AG04449 (cell line): ENCODE measurements at regions of chr11 and their contacts with region 1.

Region 1: GRCh38 chr11:72430741-72431570 is 3.4 kb downstream of the CLPB start:
- DNase-seq: no peak
- H3K4me3 ChIP-seq: no peak overlapping the region
- CTCF ChIP-seq: peak; percentile 75

Region 2: DNA sequence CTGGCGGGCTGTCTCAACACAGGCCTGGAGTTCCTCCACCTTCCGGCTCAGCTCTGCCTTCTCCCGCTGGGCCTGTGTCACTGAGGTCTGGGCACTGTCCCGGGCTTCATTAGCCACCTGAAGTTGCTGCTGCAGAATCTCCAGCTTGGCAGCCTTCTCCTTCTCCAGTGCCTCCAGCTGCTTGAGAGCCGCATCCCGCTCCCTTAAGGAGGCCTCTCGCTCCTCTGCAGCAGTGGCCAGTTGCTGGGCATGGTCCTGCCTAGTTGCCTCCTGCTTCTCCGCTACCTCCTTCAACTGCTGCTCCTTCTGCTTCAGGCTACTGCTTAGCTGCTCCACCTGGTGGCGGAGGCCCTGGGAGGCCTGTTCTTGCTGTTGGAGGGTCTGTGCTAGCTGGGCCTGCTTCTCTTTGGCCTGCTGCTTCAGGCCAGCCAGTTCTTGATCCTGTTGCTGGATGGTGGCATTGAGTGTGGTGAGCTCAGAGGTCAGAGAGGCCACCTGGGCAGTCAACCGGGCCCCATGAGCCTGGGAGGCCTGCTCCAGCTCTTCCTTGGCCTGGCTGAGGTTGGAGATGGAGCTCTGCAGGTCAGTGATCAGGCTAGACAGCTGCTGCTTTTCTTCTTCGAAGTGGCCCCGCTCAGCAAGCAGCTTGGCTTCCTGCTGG is 415.3 kb before region 1 on chr11:
- CTCF ChIA-PET with region 1: interaction called, 13 read pairs
- POLR2A ChIA-PET with region 1: no interaction called
- DNase-seq: no peak
- H3K4me3 ChIP-seq: no peak overlapping the region
- CTCF ChIP-seq: peak; percentile 58

Region 3: GRCh38 chr11:72102946-72103753 is 327.8 kb before region 1 on chr11 and contains the start of gene LAMTOR1:
- CTCF ChIA-PET with region 1: interaction called, 11 read pairs
- POLR2A ChIA-PET with region 1: no interaction called
- DNase-seq: peak; percentile 91
- H3K4me3 ChIP-seq: peak within 1 kb of the TSS; percentile 78
- CTCF ChIP-seq: peak; percentile 40

Region 4: DNA sequence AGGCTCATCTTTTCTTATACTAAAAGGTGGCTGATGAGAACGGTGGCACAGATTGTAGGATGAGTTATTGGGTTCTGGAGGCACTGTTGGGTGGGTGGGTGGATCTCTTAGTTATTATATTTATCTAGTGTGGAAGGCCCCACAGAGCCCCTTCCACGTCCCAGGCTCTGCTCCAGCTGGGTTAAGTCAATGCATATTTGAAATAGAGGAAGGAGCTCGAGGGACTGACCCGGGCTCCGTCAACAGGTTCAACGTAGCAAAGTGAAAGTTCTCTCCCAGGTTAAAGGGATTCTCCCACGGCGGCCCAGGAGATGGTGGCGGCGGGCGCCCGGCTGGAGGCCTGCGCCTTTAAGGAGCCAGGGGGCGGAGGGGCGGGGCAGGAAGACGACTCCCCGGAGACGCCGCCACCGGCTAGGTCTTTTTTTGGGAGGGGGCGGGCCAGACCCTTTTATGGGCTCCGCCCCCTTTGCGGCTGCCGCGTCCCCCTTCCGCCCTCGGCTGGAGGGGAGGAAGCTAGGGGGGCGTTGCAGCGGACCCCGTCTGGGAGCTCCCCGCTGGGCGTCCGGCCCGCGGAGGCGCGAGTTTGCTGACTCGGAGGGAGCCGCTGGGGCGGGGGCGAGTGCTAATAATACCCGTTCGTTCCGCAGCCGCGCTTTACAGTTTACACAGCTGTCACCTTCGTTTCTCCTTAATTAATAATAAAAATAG is 207.9 kb before region 1 on chr11:
- CTCF ChIA-PET with region 1: interaction called, 21 read pairs
- POLR2A ChIA-PET with region 1: no interaction called
- DNase-seq: no peak
- H3K4me3 ChIP-seq: peak overlapping the region; percentile 91
- CTCF ChIP-seq: peak; percentile 35

Region 5: DNA sequence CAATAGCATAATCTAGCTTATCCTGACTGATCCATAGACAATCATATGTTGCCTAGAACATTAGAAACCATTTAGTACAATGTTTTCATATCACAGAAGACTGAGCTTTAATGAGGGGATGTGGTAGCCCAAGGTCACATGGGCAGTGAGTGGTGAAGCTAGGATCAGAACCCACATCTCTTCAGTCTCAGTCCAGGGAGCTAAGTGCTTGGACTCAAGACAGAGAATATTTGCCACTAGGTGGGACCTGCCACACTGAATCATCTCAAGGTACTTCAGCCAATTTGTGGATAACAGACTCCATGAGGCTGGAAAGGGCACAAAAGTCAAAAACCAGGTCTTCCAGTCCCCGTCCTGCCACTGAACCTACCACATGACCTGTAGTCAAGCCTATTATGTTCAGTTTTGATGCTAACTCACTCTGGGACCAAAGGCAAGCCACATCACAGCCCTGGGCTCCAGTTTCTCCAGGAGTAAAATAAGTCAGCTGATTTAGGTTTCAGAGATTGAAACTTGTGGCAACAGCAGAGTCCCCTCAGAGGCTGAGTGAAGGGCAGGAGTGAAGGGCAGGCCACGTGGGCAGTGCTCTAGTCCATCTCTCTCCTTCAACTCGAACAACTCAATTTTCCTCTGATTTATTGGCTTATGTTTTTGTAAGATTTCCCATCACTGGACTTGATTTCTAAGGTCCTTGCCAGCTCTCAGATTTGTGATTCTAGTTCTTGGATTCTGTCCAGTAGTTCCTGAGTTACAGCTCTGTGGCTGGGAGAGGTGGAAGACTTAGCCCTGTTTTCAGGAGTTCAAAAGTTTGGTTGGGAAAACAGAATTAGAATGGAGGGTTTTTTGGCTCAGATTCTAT is 102.4 kb before region 1 on chr11:
- CTCF ChIA-PET with region 1: interaction called, 14 read pairs
- POLR2A ChIA-PET with region 1: no interaction called
- DNase-seq: no peak
- H3K4me3 ChIP-seq: no peak overlapping the region
- CTCF ChIP-seq: peak; percentile 10

Region 6: GRCh38 chr11:72361321-72361720 is 69.6 kb before region 1 on chr11:
- CTCF ChIA-PET with region 1: no interaction called
- POLR2A ChIA-PET with region 1: no interaction called
- DNase-seq: no peak
- H3K4me3 ChIP-seq: no peak overlapping the region
- CTCF ChIP-seq: no peak

Region 7: DNA sequence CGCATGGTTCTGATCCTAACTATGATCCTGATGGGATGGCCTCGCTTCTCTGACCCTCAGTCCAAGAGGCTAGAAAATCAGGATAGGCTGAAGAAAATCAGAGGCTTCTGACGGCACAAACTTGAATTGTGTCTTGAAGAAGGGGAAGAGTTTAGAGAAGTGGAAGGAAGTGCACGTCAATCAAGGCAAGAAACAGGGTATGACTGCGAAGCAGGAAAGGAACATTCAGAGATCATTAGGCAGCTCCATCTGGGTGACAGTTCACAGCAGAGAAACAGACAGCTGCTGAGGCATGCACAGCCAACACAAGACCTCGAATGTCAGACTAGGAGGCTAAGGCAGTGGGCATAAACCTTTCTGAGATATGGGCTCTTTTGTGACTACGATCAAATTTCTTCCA is 25.9 kb before region 1 on chr11:
- CTCF ChIA-PET with region 1: interaction called, 22 read pairs
- POLR2A ChIA-PET with region 1: no interaction called
- DNase-seq: no peak
- H3K4me3 ChIP-seq: no peak overlapping the region
- CTCF ChIP-seq: no peak

Region 8: DNA sequence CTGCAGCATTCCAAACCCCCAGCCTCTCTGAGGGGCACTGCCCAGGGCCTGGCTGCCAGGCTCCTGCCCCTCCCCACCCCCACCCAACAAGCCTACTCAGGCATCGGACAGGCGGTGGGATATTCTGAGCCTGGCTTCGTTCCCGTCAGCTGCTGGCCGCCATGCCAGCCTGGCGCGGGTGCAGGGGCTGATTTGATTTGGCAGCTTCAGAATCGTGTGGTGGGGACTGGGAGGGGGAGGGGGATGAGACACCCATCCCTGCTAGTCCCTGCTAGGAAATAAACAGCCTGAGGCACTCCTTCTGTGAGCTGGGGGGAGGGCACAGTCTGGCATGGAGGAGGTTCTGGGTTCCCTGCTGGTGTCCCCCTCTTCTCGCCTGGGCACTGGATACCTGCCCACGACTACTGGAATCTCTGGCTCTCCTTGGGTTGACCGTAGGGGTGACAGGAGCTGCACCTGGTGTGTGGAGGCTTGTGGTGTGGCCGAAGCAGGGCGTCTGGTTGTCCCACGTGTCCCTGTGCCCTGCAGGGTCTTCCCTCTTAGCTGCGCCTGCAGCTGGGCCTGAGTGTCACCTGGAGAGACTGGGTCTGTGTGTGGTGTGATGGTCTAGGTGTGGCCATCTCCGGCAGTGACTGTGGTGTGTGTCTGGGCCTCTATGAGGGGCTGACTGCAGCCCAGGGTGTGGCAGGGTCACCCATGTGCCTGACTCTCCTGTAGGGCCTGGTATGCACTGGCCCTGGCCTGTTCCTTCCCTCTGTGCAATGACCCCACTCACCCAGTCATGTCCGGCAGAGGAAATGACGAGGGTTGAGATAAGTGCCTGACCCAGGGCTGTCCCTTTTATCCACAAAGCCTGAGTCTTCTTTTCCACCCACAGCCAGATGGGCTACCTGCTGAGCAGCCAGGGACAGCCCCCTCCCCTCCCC is 201.1 kb after region 1 on chr11:
- CTCF ChIA-PET with region 1: no interaction called
- POLR2A ChIA-PET with region 1: no interaction called
- DNase-seq: no peak
- H3K4me3 ChIP-seq: no peak overlapping the region
- CTCF ChIP-seq: no peak